ENCODE measurements at regions of chr2 and their contacts with region 1.

Region 1: GRCh38 chr2:9630749-9631483 is at the start of gene YWHAQ:
- DNase-seq: peak; percentile 99
- H3K27ac ChIP-seq: peak within 1 kb of the TSS; percentile 94
- CTCF ChIP-seq: no peak

Region 2: GRCh38 chr2:9585486-9585885 is 45.4 kb before region 1 on chr2:
- CTCF ChIA-PET with region 1: interaction called, 10 read pairs
- POLR2A ChIA-PET with region 1: interaction called, 7 read pairs
- DNase-seq: no peak
- H3K27ac ChIP-seq: no peak overlapping the region
- CTCF ChIP-seq: no peak

Measured in RWPE1 (cell line).